GM12878 (cell line): ENCODE measurements at regions of chr4 and their contacts with region 1.

Region 1: GRCh38 chr4:67087897-67088296 is 457.4 kb downstream of the CENPC start:
- DNase-seq: no peak
- ATAC-seq: peak; percentile 84
- H3K4me3 ChIP-seq: no peak overlapping the region
- H3K27ac ChIP-seq: no peak overlapping the region
- H3K4me1 ChIP-seq: no peaks in the 10 kb centered on the region
- H3K27me3 ChIP-seq: no peaks in the 10 kb centered on the region
- CTCF ChIP-seq: peak; percentile 63 to 72 (median 64)
- EP300 ChIP-seq: no peak
- POLR2A ChIP-seq: no peak
- RAD21 ChIP-seq: peak; percentile 72

Region 2: DNA sequence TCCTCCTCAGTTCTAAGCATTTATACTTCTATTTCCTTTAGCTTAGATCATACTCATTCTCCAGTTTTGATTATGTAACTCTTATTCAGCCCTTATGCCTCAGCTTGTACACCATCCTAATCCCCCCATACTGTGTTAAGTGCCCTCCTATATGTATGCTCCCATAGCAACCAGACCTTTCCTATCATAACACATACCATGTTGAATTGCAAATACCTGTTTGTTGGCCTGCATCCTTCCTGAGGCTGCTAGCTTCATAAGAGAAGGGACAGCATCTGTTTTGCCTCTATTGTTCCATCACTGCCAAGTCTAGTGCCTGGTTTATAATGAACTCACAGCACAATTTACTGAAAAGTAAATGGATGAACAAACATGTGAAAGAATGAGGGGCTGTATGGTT is 13.7 kb after region 1 on chr4:
- CTCF ChIA-PET with region 1: interaction called, 10 read pairs
- POLR2A ChIA-PET with region 1: no interaction called
- RAD21 ChIA-PET with region 1: no interaction called
- SMC1A ChIA-PET with region 1: no interaction called
- in situ Hi-C with region 1: no loop called
- intact Hi-C with region 1: no loop called
- DNase-seq: no peak
- ATAC-seq: no peak
- H3K4me3 ChIP-seq: no peak overlapping the region
- H3K27ac ChIP-seq: no peak overlapping the region
- H3K4me1 ChIP-seq: no peaks in the 10 kb centered on the region
- H3K27me3 ChIP-seq: no peaks in the 10 kb centered on the region
- CTCF ChIP-seq: no peak
- EP300 ChIP-seq: no peak
- POLR2A ChIP-seq: no peak
- RAD21 ChIP-seq: no peak

Region 3: GRCh38 chr4:67288964-67289363 is 201.1 kb after region 1 on chr4:
- CTCF ChIA-PET with region 1: interaction called, 13 read pairs
- POLR2A ChIA-PET with region 1: no interaction called
- RAD21 ChIA-PET with region 1: interaction called, 5 read pairs
- SMC1A ChIA-PET with region 1: interaction called, 6 read pairs
- in situ Hi-C with region 1: no loop called
- intact Hi-C with region 1: no loop called
- DNase-seq: no peak
- ATAC-seq: peak; percentile 80
- H3K4me3 ChIP-seq: no peak overlapping the region
- H3K27ac ChIP-seq: no peak overlapping the region
- H3K4me1 ChIP-seq: no peaks in the 10 kb centered on the region
- H3K27me3 ChIP-seq: no peaks in the 10 kb centered on the region
- CTCF ChIP-seq: peak; percentile 51 to 58 (median 55); a peak in 4 of 6 replicates
- EP300 ChIP-seq: no peak
- POLR2A ChIP-seq: no peak
- RAD21 ChIP-seq: peak; percentile 73

Region 4: GRCh38 chr4:67327262-67328017 is 239.5 kb after region 1 on chr4:
- CTCF ChIA-PET with region 1: interaction called, 43 read pairs
- POLR2A ChIA-PET with region 1: no interaction called
- RAD21 ChIA-PET with region 1: interaction called, 15 read pairs
- SMC1A ChIA-PET with region 1: interaction called, 14 read pairs
- in situ Hi-C with region 1: loop called (anchors 5 kb)
- intact Hi-C with region 1: loop called (anchors 1 kb)
- DNase-seq: peak; percentile 9
- ATAC-seq: peak; percentile 95
- H3K4me3 ChIP-seq: no peak overlapping the region
- H3K27ac ChIP-seq: no peak overlapping the region
- H3K4me1 ChIP-seq: no peaks in the 10 kb centered on the region
- H3K27me3 ChIP-seq: no peaks in the 10 kb centered on the region
- CTCF ChIP-seq: peak; percentile 82 to 90 (median 90)
- EP300 ChIP-seq: no peak
- POLR2A ChIP-seq: no peak
- RAD21 ChIP-seq: peak; percentile 92

Region 5: GRCh38 chr4:67397031-67397430 is 309.1 kb after region 1 on chr4:
- CTCF ChIA-PET with region 1: interaction called, 6 read pairs
- POLR2A ChIA-PET with region 1: no interaction called
- RAD21 ChIA-PET with region 1: no interaction called
- SMC1A ChIA-PET with region 1: interaction called, 4 read pairs
- in situ Hi-C with region 1: no loop called
- intact Hi-C with region 1: loop called (anchors 2 kb)
- DNase-seq: no peak
- ATAC-seq: no peak
- H3K4me3 ChIP-seq: no peak overlapping the region
- H3K27ac ChIP-seq: no peak overlapping the region
- H3K4me1 ChIP-seq: no peaks in the 10 kb centered on the region
- H3K27me3 ChIP-seq: no peaks in the 10 kb centered on the region; a peak in 1 of 4 replicates
- CTCF ChIP-seq: no peak
- EP300 ChIP-seq: no peak
- POLR2A ChIP-seq: no peak
- RAD21 ChIP-seq: no peak